BJ (cell line): ENCODE measurements at regions of chr16 and their contacts with region 1.

Region 1: GRCh38 chr16:71358464-71358998 is at the start of gene CALB2:
- DNase-seq: no peak
- H3K4me3 ChIP-seq: 0 out of 2 replicates have a peak within 1 kb of the TSS, but pooled peaks have one; percentile 15
- H3K27me3 ChIP-seq: peaks cover 5% of the 10 kb centered on the region; the same call in 1 of the 2 replicates
- CTCF ChIP-seq: peak; percentile 61
- polyA plus RNA-seq, gene CALB2: 0.16 and 0.18 TPM in 2 replicates

Region 2: DNA sequence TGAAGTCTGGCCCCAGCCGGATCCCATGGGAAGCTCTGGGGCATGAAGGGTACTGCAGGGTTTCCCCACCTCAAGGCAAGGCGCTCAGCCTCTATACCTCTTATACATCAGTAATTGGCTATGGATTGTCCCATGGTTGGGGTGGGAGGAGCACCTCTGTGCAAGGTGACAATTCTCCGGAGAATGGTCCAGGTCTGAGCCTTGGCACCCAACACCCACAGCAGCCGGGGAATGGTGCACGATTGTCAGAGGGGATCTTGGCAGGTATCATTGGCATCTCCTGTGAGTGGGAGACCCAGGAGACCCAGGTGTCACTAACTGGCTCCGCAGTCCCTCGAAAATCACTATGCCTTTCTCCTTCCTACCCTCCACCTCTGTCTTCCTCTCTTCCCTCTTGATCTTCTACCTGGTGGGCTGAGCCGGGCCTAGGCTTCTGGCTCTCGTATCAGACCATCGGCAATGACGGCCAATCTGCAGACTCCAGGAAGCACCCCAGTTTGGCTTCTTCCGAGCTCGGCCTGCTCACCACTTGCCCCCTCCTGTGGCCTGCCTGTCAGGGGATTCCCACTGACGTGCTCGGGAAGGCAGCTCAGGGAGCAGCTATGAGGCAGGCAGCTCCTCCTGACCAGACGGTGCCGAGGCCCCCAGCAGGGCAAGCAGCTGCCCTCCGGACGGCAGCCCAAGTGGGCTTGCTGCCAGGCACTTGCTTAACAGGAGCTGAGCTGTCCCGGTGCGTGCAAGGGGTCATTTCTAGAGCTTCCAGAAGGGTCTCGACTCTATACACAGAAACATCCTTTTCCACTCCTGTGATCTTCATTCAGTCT is 10.1 kb before region 1 on chr16:
- CTCF ChIA-PET with region 1: interaction called, 20 read pairs
- POLR2A ChIA-PET with region 1: no interaction called
- DNase-seq: no peak
- H3K4me3 ChIP-seq: no peak overlapping the region
- H3K27me3 ChIP-seq: peaks cover 1% of the 10 kb centered on the region; the same call in 1 of the 2 replicates
- CTCF ChIP-seq: no peak

Region 3: GRCh38 chr16:71489122-71489521 is 130.6 kb after region 1 on chr16 and contains the start of gene ZNF19:
- CTCF ChIA-PET with region 1: no interaction called
- POLR2A ChIA-PET with region 1: no interaction called
- DNase-seq: no peak
- H3K4me3 ChIP-seq: no peak within 1 kb of the TSS
- H3K27me3 ChIP-seq: no peaks in the 10 kb centered on the region
- CTCF ChIP-seq: no peak
- polyA plus RNA-seq, gene ZNF19: 1.6 and 2.2 TPM in 2 replicates